BJ (cell line): ENCODE measurements at regions of chr1 and their contacts with region 1.

Region 1: GRCh38 chr1:201970334-201971159 is 11.9 kb upstream of the RNPEP start:
- DNase-seq: no peak
- H3K4me3 ChIP-seq: no peak overlapping the region
- H3K27me3 ChIP-seq: no peaks in the 10 kb centered on the region
- CTCF ChIP-seq: no peak

Region 2: DNA sequence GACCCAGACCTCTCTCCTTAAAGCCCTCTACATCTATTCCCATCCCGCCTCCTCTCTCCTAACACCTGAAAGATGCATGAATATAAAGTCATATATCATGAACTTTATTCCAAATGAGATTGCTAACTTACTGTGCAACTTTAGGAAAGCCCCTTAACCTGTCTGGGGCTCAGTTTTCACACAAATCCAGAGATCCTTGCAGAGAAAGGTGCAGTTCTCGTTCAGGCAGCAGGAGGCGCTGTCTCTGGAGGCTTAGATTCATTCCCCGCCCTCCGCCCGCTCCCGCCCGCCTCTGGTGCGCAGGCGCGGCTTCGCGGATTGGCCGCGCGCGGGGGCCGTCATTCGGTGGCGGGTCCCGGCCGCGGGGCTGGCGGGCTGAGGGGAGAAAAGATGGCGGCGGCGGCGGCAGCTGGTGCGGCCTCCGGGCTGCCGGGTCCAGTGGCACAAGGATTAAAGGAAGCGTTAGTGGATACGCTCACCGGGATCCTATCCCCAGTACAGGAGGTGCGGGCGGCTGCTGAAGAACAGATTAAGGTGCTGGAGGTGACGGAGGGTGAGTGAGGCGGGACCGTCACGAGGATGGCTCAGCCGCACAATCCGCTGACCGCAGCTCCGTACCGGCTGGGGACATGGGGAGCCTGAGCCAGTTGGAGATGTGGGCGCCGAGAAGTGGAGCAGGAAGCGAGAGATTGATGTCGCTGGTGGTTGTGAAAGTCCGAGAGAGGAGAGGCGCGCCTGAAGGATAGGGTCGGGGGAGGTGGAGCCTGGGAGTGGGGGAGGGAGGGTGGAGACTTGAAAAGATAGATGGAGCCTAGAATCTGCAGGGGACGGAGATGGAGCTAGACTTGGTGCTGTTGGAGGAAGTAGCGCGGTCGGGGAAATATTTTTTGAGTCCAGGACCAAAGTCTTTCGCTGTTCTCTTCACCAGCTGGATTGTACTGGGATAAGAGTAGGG is 141.4 kb before region 1 on chr1 and contains the start of gene IPO9:
- CTCF ChIA-PET with region 1: interaction called, 15 read pairs
- POLR2A ChIA-PET with region 1: no interaction called
- DNase-seq: peak; percentile 51
- H3K4me3 ChIP-seq: peak within 1 kb of the TSS; percentile 99
- H3K27me3 ChIP-seq: no peaks in the 10 kb centered on the region
- CTCF ChIP-seq: peak; percentile 91
- polyA plus RNA-seq, gene IPO9: 48.2 and 49.5 TPM in 2 replicates

Region 3: DNA sequence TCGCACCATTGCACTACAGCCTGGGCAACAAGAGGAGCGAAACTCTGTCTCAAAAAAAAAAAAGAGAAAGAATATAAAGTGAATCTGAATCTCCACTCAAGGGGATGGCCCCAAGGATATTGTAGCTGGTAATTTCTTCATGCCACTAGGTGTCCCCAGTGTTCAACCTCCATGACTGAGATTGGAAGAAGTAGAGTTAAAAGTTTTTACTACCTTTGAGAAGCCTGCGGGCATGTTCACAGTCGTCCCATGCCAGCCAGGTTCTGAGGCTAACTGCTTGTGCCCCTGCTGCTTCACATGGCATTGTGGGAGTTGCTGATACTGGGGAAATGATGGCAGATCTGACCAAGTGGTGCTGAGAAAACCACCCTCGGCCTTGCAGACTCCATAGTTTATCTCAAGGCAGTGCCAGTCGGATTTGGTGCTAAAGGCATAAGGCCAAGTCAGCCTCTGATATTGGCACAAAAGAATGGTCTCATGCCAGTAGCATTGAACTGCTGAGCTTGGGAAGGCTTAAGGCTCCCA is 92.6 kb before region 1 on chr1:
- CTCF ChIA-PET with region 1: interaction called, 48 read pairs
- POLR2A ChIA-PET with region 1: no interaction called
- DNase-seq: no peak
- H3K4me3 ChIP-seq: no peak overlapping the region
- H3K27me3 ChIP-seq: no peaks in the 10 kb centered on the region
- CTCF ChIP-seq: peak; percentile 71

Region 4: GRCh38 chr1:201904579-201904978 is 66.0 kb before region 1 on chr1:
- CTCF ChIA-PET with region 1: interaction called, 201 read pairs
- POLR2A ChIA-PET with region 1: no interaction called
- DNase-seq: peak; percentile 73
- H3K4me3 ChIP-seq: no peak overlapping the region
- H3K27me3 ChIP-seq: no peaks in the 10 kb centered on the region
- CTCF ChIP-seq: no peak

Region 5: DNA sequence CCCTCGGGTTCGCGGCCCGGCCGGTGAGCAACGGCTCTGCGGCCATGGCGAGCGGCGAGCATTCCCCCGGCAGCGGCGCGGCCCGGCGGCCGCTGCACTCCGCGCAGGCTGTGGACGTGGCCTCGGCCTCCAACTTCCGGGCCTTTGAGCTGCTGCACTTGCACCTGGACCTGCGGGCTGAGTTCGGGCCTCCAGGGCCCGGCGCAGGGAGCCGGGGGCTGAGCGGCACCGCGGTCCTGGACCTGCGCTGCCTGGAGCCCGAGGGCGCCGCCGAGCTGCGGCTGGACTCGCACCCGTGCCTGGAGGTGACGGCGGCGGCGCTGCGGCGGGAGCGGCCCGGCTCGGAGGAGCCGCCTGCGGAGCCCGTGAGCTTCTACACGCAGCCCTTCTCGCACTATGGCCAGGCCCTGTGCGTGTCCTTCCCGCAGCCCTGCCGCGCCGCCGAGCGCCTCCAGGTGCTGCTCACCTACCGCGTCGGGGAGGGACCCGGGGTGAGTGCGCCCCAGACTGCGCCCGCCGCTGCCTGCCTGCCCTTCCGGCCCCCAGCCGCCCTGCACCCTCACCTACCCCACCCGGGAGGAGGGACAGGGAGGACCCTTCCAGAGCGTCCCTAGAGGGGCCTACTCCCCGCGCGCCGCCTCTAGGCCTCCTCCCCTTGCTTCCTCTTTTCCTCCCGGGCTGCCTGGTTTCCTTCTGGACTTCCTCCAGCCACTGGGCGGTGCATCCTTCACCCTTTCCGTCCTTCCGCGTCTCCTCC is 12.3 kb after region 1 on chr1 and contains the start of gene RNPEP:
- CTCF ChIA-PET with region 1: interaction called, 14 read pairs
- POLR2A ChIA-PET with region 1: no interaction called
- DNase-seq: no peak
- H3K4me3 ChIP-seq: peak within 1 kb of the TSS; percentile 81
- H3K27me3 ChIP-seq: no peaks in the 10 kb centered on the region
- CTCF ChIP-seq: no peak
- polyA plus RNA-seq, gene RNPEP: 42.6 and 51.5 TPM in 2 replicates